ENCODE measurements at regions of chr20 and their contacts with region 1.

Region 1: DNA sequence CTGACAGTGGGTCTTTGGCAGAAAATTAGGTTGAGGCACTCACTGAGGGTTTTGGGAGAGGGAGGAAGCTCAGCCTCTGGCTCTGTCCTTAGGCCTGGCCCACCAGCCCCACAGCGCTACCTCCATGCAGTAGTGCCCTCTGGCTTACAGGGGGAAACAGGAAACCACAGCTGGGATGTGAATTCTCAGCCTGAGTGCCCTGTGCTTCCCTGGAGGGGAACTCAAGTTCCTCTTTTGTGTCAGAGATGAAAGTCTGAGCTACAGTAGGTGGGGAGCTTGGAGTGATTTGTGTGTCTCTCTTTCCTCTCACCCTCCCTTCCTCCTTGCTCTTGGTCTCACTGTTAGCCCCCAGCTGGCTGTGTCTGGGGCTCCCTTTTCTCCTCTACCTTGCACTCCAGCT is 48.2 kb upstream of the BLCAP start:
- DNase-seq: no peak
- H3K4me3 ChIP-seq: no peak overlapping the region
- CTCF ChIP-seq: no peak

Region 2: GRCh38 chr20:37501940-37502339 is 73.9 kb before region 1 on chr20:
- in situ Hi-C with region 1: no loop called
- DNase-seq: no peak
- H3K4me3 ChIP-seq: no peak overlapping the region
- CTCF ChIP-seq: no peak

Region 3: GRCh38 chr20:37527638-37528441 is 48.0 kb before region 1 on chr20 and contains the start of gene BLCAP:
- in situ Hi-C with region 1: no loop called
- DNase-seq: peak; percentile 53
- H3K4me3 ChIP-seq: peak within 1 kb of the TSS; percentile 95
- CTCF ChIP-seq: no peak

Region 4: DNA sequence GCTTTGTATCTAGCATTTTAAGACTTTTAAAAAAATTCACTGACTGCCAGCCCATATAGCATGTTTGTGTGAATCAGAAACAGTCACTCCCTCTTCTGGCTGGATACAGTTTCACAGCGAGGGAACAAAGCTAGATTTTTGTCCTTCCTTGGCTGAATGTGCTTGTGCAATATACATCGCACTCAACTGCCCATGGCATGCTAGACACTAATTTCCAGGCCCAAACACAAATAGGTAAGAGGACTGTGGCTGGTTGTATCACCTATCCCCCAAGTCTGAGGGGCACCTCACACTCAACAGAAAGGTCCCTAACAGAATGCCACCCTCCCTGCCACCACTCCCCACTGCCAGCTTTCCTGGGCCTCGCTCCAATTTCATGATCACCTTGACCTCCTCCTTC is 32.1 kb before region 1 on chr20:
- in situ Hi-C with region 1: no loop called
- DNase-seq: no peak
- H3K4me3 ChIP-seq: no peak overlapping the region
- CTCF ChIP-seq: peak; percentile 59

Region 5: GRCh38 chr20:37630166-37630565 is 54.3 kb after region 1 on chr20:
- in situ Hi-C with region 1: loop called (anchors 5 kb)
- DNase-seq: no peak
- H3K4me3 ChIP-seq: no peak overlapping the region
- CTCF ChIP-seq: no peak

Region 6: DNA sequence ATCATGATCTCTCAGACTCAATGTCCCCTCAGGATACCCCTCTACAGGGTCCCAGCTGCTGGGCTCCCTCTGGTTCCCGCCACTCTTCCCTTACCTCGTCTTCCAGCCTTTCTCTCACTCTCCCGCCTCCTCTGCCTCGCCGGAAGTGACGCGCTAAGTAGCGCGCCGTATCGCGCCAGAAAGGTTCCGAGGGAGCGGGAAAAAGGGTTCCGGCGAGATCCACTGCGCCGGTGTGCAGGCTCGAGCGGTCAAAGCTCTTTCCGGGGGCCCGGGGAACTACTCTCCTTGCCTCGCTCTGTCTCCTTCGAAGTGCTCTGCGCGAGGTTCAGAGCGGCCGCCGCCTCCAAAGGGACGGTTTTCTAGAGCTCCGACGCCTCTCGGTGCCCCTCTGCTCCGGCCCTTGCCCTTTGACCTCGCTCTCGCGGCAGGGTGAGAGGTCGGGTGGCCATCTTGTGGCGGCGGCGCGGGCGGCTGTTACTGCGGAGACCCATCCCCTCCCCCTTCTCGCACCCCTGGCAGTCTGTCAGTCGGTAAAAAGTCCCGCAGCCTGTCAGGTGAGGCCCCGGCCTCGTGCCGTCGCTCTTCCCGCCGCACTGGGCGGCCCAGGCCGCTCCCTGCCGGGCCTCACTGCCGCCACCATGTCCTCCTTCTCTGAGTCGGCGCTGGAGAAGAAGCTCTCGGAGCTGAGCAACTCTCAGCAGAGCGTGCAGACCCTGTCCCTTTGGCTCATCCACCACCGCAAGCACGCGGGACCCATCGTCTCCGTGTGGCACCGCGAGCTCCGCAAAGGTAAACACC is 457.6 kb after region 1 on chr20 and contains the starts of genes RPRD1B and TTI1:
- in situ Hi-C with region 1: loop called (anchors 25 kb)
- DNase-seq: peak; percentile 70
- H3K4me3 ChIP-seq: peak within 1 kb of the TSS; percentile 83
- CTCF ChIP-seq: no peak

Measured in astrocyte of the cerebellum (primary cell).